MCF 10A (cell line): ENCODE measurements at regions of chr2 and their contacts with region 1.

Region 1: GRCh38 chr2:28392297-28393113 is at the start of gene FOSL2:
- DNase-seq: peak; percentile 99
- H3K4me3 Mint-ChIP-seq: no peak within 1 kb of the TSS
- H3K27ac Mint-ChIP-seq: no peak within 1 kb of the TSS
- H3K4me1 Mint-ChIP-seq: peaks cover 18% of the 10 kb centered on the region
- H3K27me3 Mint-ChIP-seq: no peaks in the 10 kb centered on the region
- CTCF ChIP-seq: no peak
- total RNA-seq, gene FOSL2: 122 and 141 TPM in 2 replicates

Region 2: GRCh38 chr2:27485496-27485895 is 907.0 kb before region 1 on chr2:
- CTCF ChIA-PET with region 1: no interaction called
- POLR2A ChIA-PET with region 1: no interaction called
- intact Hi-C with region 1: no loop called
- DNase-seq: no peak
- H3K4me3 Mint-ChIP-seq: no peak overlapping the region
- H3K27ac Mint-ChIP-seq: no peak overlapping the region
- H3K4me1 Mint-ChIP-seq: peaks cover 6% of the 10 kb centered on the region
- H3K27me3 Mint-ChIP-seq: no peaks in the 10 kb centered on the region
- CTCF ChIP-seq: no peak

Region 3: GRCh38 chr2:27798948-27799645 is 593.4 kb before region 1 on chr2:
- CTCF ChIA-PET with region 1: no interaction called
- POLR2A ChIA-PET with region 1: interaction called, 4 read pairs
- intact Hi-C with region 1: loop called (anchors 1 kb)
- DNase-seq: peak; percentile 98
- H3K4me3 Mint-ChIP-seq: no peak overlapping the region
- H3K27ac Mint-ChIP-seq: peak overlapping the region; percentile 68
- H3K4me1 Mint-ChIP-seq: peaks cover 59% of the 10 kb centered on the region
- H3K27me3 Mint-ChIP-seq: no peaks in the 10 kb centered on the region
- CTCF ChIP-seq: no peak

Region 4: GRCh38 chr2:28137221-28137620 is 255.3 kb before region 1 on chr2:
- CTCF ChIA-PET with region 1: no interaction called
- POLR2A ChIA-PET with region 1: interaction called, 19 read pairs
- intact Hi-C with region 1: no loop called
- DNase-seq: peak; percentile 70
- H3K4me3 Mint-ChIP-seq: peak overlapping the region; percentile 16
- H3K27ac Mint-ChIP-seq: peak overlapping the region; percentile 57
- H3K4me1 Mint-ChIP-seq: peaks cover 46% of the 10 kb centered on the region
- H3K27me3 Mint-ChIP-seq: no peaks in the 10 kb centered on the region
- CTCF ChIP-seq: no peak

Region 5: DNA sequence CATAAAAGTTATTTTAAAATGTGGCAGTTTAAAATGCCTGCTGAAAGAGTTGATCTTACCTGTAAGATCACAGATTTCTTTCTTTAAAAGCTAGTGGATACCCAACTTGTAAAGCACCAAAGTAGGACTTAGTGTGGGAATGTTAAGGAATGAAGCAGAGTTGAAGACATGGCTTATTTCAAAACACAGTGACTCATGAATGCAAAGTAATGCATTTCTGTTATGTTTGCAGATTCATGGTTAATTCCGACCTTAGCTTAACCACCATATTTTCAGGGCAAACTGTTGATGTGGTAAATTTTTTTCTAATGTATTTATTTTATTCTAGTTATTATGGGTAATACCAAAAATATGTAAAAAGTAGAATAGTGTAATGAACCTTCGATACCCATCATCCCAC is 206.6 kb before region 1 on chr2:
- CTCF ChIA-PET with region 1: no interaction called
- POLR2A ChIA-PET with region 1: interaction called, 44 read pairs
- intact Hi-C with region 1: no loop called
- DNase-seq: peak; percentile 55
- H3K4me3 Mint-ChIP-seq: no peak overlapping the region
- H3K27ac Mint-ChIP-seq: peak overlapping the region; percentile 94
- H3K4me1 Mint-ChIP-seq: peaks cover 16% of the 10 kb centered on the region
- H3K27me3 Mint-ChIP-seq: no peaks in the 10 kb centered on the region
- CTCF ChIP-seq: no peak

Region 6: GRCh38 chr2:28276076-28276618 is 116.4 kb before region 1 on chr2:
- CTCF ChIA-PET with region 1: interaction called, 7 read pairs
- POLR2A ChIA-PET with region 1: interaction called, 277 read pairs
- intact Hi-C with region 1: loop called (anchors 2 kb)
- DNase-seq: peak; percentile 94
- H3K4me3 Mint-ChIP-seq: peak overlapping the region; percentile 32
- H3K27ac Mint-ChIP-seq: peak overlapping the region; percentile 88
- H3K4me1 Mint-ChIP-seq: peaks cover 48% of the 10 kb centered on the region
- H3K27me3 Mint-ChIP-seq: no peaks in the 10 kb centered on the region
- CTCF ChIP-seq: no peak

Region 7: DNA sequence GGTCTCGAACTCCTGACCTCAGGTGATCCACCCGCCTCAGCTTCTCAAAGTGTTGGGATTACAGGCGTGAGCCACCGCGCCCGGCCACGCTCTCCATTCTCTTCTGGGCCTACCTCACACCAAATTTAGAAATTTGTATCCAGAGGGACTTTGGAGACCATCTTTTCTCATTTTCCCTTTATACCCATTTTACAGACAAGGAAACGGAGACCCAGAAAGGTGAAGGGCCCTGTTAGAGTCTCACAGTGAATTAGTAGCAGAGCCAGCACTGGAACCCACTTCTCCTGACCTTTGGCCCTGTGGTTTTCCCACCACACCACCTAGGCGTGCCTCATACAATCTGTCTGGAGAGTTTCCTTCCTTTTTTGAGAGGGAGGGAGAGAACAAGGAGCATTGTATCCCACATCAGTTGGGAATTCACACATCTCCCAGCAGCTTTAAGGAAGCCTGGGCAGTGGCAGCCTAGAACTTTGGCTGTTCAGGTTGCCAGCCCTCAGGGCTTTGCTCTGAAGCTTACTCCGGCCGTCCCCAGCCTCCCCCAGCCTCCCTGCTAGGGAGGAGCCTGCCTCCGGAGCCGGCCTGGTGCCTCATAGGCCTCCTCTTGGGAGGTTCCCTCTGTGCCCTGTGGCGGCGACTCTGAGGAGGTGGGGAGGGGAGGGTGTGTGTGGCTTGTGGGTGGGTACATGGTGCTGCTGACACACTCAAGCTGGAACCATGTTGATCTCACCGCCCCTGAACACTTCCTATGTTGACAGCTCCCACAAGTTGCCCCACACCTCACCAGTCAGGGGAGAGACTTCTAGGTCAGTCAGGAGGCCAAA is 14.0 kb after region 1 on chr2:
- CTCF ChIA-PET with region 1: no interaction called
- POLR2A ChIA-PET with region 1: interaction called, 53 read pairs
- intact Hi-C with region 1: no loop called
- DNase-seq: peak; percentile 75
- H3K4me3 Mint-ChIP-seq: no peak overlapping the region
- H3K27ac Mint-ChIP-seq: peak overlapping the region; percentile 85
- H3K4me1 Mint-ChIP-seq: peaks cover 40% of the 10 kb centered on the region
- H3K27me3 Mint-ChIP-seq: no peaks in the 10 kb centered on the region
- CTCF ChIP-seq: no peak

Region 8: GRCh38 chr2:28507806-28508764 is 115.6 kb after region 1 on chr2:
- CTCF ChIA-PET with region 1: no interaction called
- POLR2A ChIA-PET with region 1: no interaction called
- intact Hi-C with region 1: no loop called
- DNase-seq: peak; percentile 83
- H3K4me3 Mint-ChIP-seq: no peak overlapping the region
- H3K27ac Mint-ChIP-seq: peak overlapping the region; percentile 52
- H3K4me1 Mint-ChIP-seq: peaks cover 8% of the 10 kb centered on the region
- H3K27me3 Mint-ChIP-seq: peaks cover 1% of the 10 kb centered on the region
- CTCF ChIP-seq: no peak

Region 9: GRCh38 chr2:28681158-28681571 is 288.7 kb after region 1 on chr2:
- CTCF ChIA-PET with region 1: no interaction called
- POLR2A ChIA-PET with region 1: no interaction called
- intact Hi-C with region 1: no loop called
- DNase-seq: peak; percentile 59
- H3K4me3 Mint-ChIP-seq: no peak overlapping the region
- H3K27ac Mint-ChIP-seq: no peak overlapping the region
- H3K4me1 Mint-ChIP-seq: peaks cover 13% of the 10 kb centered on the region
- H3K27me3 Mint-ChIP-seq: no peaks in the 10 kb centered on the region
- CTCF ChIP-seq: no peak